ENCODE measurements at regions of chr15 and their contacts with region 1.

Region 1: GRCh38 chr15:101641166-101641764 is 10.9 kb downstream of the TM2D3 start:
- DNase-seq: peak; percentile 65 to 76
- ATAC-seq: peak; percentile 31 to 79 (median 64)
- H3K4me3 ChIP-seq: peak overlapping the region; percentile 22
- H3K27ac ChIP-seq: peak overlapping the region; percentile 71
- H3K4me1 ChIP-seq: peaks cover 26% of the 10 kb centered on the region
- H3K27me3 ChIP-seq: no peaks in the 10 kb centered on the region
- CTCF ChIP-seq: peak; percentile 97

Region 2: DNA sequence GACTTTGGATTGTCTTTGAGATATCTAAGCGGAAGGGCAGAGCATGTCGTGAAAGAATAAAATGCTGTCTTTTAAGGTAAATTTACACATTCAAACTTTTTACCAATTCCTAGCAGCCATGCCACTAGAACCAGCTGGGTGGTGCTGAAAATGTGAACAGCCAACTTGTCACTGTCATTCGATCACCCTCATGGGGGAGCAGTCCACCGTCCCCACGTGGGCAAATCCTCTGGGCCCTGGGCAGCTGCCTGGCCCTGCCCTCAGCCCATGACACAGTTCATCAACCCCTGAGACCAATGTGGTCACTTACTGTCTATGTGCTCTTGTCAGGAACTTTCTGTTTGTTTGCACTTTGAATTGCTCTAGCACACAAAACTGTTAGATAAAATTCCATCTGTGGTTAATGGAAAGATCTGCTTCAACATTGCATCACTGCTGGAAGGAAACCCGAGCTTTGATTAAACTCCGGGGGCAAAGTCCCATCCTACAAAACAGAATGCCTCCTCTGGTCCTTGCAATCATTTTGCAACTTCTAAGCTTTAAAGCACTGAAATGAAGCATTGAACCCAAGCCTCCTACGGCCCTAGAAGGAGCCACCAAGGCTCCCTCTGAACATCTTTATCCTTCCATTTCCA is 201.9 kb before region 1 on chr15:
- intact Hi-C with region 1: loop called in 1 of 2 experiments (anchors 5 kb)
- DNase-seq: peak; percentile 47 to 73
- ATAC-seq: peak; percentile 88 to 91 (median 90)
- H3K4me3 ChIP-seq: peak overlapping the region; percentile 0
- H3K27ac ChIP-seq: peak overlapping the region; percentile 38
- H3K4me1 ChIP-seq: peaks cover 12% of the 10 kb centered on the region
- H3K27me3 ChIP-seq: no peaks in the 10 kb centered on the region
- CTCF ChIP-seq: no peak

Region 3: DNA sequence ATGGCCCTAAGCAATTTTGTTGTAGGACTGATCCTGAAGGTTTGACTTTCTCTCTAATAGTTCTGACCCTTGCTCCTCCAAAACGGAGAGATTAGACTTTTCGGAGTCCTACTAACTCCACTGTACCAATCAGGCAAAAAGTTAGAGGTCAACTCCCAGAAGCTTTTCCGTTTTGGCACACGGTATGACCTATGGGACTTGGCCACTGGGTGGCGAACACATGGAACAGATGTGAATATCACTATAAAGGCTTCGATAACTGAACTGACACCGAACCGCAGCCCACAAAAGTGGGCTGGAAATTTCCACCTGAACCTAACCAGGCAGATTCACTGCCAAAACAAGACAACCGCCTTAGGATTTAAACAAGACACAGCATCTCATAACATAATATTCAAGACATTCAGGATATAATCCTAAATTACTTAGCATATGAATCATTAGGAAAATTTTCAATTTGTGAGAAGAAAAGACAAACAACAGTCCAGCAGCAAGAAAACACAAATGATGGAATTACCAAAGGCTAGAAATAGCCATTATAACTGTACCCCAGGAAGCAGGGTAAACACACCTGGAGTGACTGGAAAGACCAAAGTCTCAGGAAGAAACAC is 23.1 kb after region 1 on chr15:
- intact Hi-C with region 1: no loop called
- DNase-seq: no peak
- ATAC-seq: no peak
- H3K4me3 ChIP-seq: no peak overlapping the region
- H3K27ac ChIP-seq: no peak overlapping the region
- H3K4me1 ChIP-seq: no peaks in the 10 kb centered on the region
- H3K27me3 ChIP-seq: no peaks in the 10 kb centered on the region
- CTCF ChIP-seq: no peak

Measured in psoas muscle (tissue), 8 donors.